ENCODE measurements at regions of chr2 and their contacts with region 1.

Region 1: DNA sequence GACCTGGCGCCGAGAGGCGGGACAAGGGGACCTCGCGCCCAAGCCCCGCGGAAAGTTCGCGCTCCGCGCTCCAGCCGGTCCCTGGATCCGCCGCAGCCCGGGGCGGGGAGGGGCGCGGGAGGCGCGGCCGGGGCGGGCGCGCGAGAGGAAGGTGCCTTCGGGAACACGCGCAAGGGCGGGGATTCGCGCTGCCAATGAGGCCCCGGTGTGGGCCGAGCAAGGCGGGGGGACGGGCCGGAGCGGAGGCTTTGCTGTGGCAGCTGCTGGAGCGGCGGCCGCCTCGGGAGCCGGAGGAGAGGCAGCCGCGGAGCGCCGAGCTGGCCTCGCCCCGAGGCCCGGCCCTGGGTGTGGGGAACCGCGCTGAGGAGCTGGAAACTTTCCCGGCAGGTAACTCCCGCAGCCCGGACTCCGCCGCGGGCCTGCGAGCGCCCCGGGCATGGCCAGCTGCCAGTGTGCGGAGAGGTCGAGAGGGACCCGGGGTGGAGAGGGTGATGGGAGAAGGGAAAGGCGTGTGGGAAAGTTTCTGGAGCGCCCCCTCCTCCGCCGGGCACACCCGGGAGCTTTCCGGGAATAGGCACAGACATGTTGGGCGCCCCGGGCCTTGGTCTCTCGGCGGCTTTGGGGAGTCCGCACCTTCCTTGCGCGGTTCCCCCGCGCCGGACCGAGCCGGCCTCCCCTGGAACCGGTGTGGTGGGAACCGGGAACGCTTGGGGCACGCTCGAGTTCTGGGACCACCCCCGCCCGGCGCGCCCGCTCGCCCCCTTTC is at the start of gene TANC1:
- DNase-seq: peak; percentile 77 to 90
- H3K4me3 ChIP-seq: peak within 1 kb of the TSS; percentile 83
- H3K27ac ChIP-seq: peak within 1 kb of the TSS; percentile 48
- H3K4me1 ChIP-seq: peaks cover 34% of the 10 kb centered on the region
- H3K27me3 ChIP-seq: no peaks in the 10 kb centered on the region
- CTCF ChIP-seq: no peak
- total RNA-seq, gene TANC1: 21.2 and 26.0 TPM in 2 replicates

Region 2: DNA sequence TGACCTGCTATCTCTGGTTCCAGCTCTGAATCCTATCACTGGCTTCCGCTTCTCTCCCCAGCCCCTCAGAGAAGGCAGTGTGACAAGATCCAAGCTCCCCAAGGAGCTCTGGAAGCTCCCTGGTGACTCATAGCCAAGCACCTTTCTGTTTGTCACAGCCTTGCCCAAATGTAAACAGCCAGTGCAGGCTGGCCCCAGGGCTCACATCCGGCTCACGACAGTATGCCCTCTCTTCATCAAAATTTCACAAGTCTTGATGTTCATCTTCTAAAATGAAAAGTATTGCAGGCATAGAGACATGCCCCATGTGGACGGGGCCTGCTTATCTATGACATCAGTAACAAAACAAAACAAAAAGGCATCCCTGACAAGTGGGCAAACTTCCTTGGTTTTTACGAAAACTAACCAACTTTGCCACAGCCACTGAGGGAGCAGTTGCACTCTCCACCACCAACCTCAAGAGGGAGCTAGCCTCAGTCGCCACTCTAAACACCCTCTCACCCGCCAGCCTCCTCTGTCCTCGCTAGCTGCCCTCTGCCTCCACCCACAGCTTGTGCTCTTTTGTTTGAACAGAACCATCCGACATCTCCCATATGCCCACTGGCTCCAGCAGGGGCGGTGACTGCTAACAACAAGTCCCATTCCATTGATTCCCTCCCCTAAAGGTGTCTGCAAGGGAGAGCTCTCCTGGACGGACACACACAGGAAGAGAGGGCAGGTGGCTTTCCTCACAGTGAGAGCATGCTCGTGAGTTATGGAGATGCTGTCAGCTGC is 244.5 kb before region 1 on chr2:
- CTCF ChIA-PET with region 1: no interaction called
- POLR2A ChIA-PET with region 1: no interaction called
- intact Hi-C with region 1: no loop called
- DNase-seq: peak; percentile 71 to 95
- H3K4me3 ChIP-seq: peak overlapping the region; percentile 41; the same call in 1 of the 2 replicates
- H3K27ac ChIP-seq: peak overlapping the region; percentile 80
- H3K4me1 ChIP-seq: peaks cover 40% of the 10 kb centered on the region
- H3K27me3 ChIP-seq: no peaks in the 10 kb centered on the region
- CTCF ChIP-seq: peak; percentile 67

Region 3: DNA sequence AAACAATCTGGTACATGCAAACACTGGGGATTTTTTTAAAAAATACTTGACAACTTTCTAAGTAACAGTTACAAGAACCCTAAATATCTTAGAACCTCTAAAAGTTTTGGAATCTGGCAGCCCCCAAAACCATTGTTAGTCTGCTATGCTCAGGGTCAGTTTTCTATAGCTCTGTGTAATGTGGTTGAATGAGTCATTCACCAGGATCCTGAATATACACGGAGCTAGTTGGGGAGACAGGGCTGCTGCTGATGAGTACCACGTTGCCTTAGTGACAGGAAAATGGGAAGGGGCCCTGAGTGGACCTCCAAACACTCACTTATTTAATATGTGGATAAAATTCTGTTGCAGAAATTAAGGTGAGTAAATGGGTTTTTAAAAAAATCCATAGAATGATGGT is 37.0 kb before region 1 on chr2:
- CTCF ChIA-PET with region 1: no interaction called
- POLR2A ChIA-PET with region 1: no interaction called
- intact Hi-C with region 1: loop called (anchors 5 kb)
- DNase-seq: no peak
- H3K4me3 ChIP-seq: no peak overlapping the region
- H3K27ac ChIP-seq: no peak overlapping the region
- H3K4me1 ChIP-seq: peaks cover 22% of the 10 kb centered on the region
- H3K27me3 ChIP-seq: no peaks in the 10 kb centered on the region
- CTCF ChIP-seq: no peak

Region 4: DNA sequence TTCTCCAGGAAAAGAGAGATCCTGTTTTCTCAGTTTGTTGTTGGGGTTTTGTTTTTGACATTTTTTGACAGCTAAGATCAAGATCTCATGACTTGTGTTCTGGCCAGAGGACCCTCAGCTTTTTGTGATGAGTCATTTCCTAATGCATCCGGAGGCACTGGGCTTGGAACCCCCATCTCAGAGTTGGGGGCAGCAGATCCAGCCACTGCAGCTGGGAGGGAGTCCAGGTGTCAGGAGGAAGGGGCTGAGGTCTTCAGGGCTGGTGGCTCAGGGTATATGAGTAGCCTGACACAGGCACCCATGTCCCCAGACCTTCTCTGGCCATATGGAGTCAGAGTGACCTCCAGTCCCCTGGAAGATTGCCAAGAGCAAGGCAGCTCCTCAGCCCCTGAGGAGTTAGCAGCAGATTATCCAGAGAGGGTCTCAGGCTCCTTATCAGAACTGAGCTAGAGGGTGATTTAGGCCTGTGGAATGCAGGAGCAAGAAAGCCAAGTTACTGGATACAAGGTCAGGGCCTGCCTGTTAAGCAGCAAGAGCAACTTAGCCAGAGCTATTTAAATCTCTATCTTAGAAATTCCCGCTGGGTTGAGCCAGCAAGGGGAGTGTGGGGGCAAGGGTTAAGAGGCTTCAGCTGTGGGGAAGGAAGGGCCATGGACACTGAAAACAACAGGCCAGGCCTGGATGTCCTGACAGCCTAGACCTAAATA is 62.2 kb after region 1 on chr2:
- CTCF ChIA-PET with region 1: no interaction called
- POLR2A ChIA-PET with region 1: no interaction called
- intact Hi-C with region 1: loop called (anchors 5 kb)
- DNase-seq: peak; percentile 47 to 83
- H3K4me3 ChIP-seq: no peak overlapping the region
- H3K27ac ChIP-seq: peak overlapping the region; percentile 73
- H3K4me1 ChIP-seq: peaks cover 32% of the 10 kb centered on the region
- H3K27me3 ChIP-seq: no peaks in the 10 kb centered on the region
- CTCF ChIP-seq: no peak

Region 5: DNA sequence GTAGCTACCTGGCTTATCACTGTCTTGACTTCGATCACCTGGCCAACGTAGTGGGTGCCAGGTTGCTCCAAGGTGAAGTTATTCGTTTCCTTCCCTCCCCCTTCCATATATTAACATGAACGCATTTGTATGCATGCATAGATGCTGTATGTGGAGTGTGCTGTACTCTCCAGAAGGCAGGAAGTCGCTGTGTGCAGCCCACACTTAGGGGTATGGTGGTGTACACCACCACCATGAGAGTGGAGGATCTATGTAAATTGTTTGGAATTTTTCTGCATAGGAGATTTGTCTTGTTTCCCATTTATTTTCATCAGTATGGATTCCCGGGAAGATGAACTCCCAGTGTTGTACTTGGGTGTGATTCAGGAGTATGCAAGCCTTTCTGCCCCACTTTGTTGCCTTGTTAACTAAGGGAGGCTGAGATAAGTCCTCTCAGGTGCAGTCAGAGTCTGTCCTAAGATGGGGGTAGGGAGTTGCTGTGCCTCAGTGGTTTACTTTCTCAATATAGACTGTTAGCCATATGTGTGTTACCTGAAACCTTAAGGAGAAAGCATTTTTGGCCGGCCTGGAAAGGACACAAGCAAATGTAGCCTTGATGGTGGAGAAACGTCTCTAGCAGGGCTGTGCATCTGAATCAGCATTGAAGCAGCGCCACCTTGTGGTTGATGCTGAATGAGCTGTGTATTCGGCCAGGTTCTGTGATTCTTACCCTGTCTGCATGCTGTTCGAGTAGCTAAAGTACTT is 149.7 kb after region 1 on chr2:
- CTCF ChIA-PET with region 1: no interaction called
- POLR2A ChIA-PET with region 1: no interaction called
- intact Hi-C with region 1: loop called (anchors 2 kb)
- DNase-seq: peak; percentile 38 to 64
- H3K4me3 ChIP-seq: no peak overlapping the region
- H3K27ac ChIP-seq: no peak overlapping the region
- H3K4me1 ChIP-seq: peaks cover 9% of the 10 kb centered on the region
- H3K27me3 ChIP-seq: no peaks in the 10 kb centered on the region
- CTCF ChIP-seq: peak; percentile 88

Measured in PC-9 (cell line).